GM10248 (cell line): ENCODE measurements at regions of chr5 and their contacts with region 1.

Region 1: GRCh38 chr5:151110122-151110681 is 29.4 kb upstream of the TNIP1 start:
- DNase-seq: no peak
- CTCF ChIP-seq: peak; percentile 14

Region 2: GRCh38 chr5:151023651-151024050 is 86.6 kb before region 1 on chr5:
- CTCF ChIA-PET with region 1: no interaction called
- POLR2A ChIA-PET with region 1: no interaction called
- DNase-seq: no peak
- CTCF ChIP-seq: no peak

Region 3: GRCh38 chr5:151093476-151093889 is 16.7 kb before region 1 on chr5:
- CTCF ChIA-PET with region 1: interaction called, 92 read pairs
- POLR2A ChIA-PET with region 1: interaction called, 5 read pairs
- DNase-seq: no peak
- CTCF ChIP-seq: no peak

Region 4: GRCh38 chr5:151427258-151427657 is 317.1 kb after region 1 on chr5:
- CTCF ChIA-PET with region 1: no interaction called
- POLR2A ChIA-PET with region 1: no interaction called
- DNase-seq: peak; percentile 88
- CTCF ChIP-seq: no peak